K562 (cell line): ENCODE measurements at regions of chr4 and their contacts with region 1.

Region 1: DNA sequence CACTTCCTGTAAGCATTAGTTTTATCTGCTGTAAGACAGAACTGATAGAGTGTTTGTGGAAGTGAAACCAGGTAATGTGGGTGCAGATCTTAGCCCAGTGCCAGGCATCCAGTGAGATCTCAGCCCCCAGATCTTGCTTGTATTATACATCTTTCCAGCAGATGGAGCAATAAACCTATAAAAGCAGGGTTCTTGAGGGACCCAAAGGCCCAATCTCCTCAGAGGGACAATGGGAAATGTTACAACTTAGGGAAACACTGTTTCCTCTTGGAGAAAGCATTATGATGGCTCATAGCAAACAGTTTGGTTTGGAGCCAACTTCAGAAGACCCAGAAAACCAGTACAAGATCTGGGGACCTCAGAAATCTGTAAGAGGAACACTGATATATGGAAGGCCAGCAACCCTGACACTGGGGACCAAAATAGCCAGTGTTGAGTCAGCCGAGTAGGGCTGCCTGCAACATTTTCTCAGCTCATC is 206.3 kb downstream of the SLC7A11 start:
- DNase-seq: peak; percentile 22 to 62 (median 36)
- ATAC-seq: peak; percentile 97
- H3K4me3 ChIP-seq: no peak overlapping the region
- H3K27ac ChIP-seq: no peak overlapping the region
- H3K4me1 ChIP-seq: no peaks in the 10 kb centered on the region
- H3K27me3 ChIP-seq: no peaks in the 10 kb centered on the region
- CTCF ChIP-seq: peak; percentile 49 to 74 (median 60); a peak in 5 of 6 replicates
- EP300 ChIP-seq: no peak
- POLR2A ChIP-seq: no peak
- RAD21 ChIP-seq: peak; percentile 75 to 80

Region 2: GRCh38 chr4:137934911-137935310 is 100.9 kb before region 1 on chr4:
- CTCF ChIA-PET with region 1: no interaction called
- POLR2A ChIA-PET with region 1: no interaction called
- in situ Hi-C with region 1: no loop called
- intact Hi-C with region 1: no loop called
- DNase-seq: no peak
- ATAC-seq: no peak
- H3K4me3 ChIP-seq: no peak overlapping the region
- H3K27ac ChIP-seq: no peak overlapping the region
- H3K4me1 ChIP-seq: no peaks in the 10 kb centered on the region; a peak in 1 of 5 replicates
- H3K27me3 ChIP-seq: no peaks in the 10 kb centered on the region
- CTCF ChIP-seq: no peak
- EP300 ChIP-seq: no peak
- POLR2A ChIP-seq: no peak
- RAD21 ChIP-seq: no peak

Region 3: GRCh38 chr4:138090150-138090917 is 54.5 kb after region 1 on chr4:
- CTCF ChIA-PET with region 1: no interaction called
- POLR2A ChIA-PET with region 1: no interaction called
- in situ Hi-C with region 1: no loop called
- intact Hi-C with region 1: loop called (anchors 1 kb)
- DNase-seq: peak; percentile 60 to 72 (median 64)
- ATAC-seq: peak; percentile 91
- H3K4me3 ChIP-seq: no peak overlapping the region
- H3K27ac ChIP-seq: no peak overlapping the region
- H3K4me1 ChIP-seq: no peaks in the 10 kb centered on the region
- H3K27me3 ChIP-seq: no peaks in the 10 kb centered on the region; a peak in 1 of 5 replicates
- CTCF ChIP-seq: peak; percentile 60 to 79 (median 72)
- EP300 ChIP-seq: no peak
- POLR2A ChIP-seq: no peak
- RAD21 ChIP-seq: peak; percentile 48 to 76

Region 4: DNA sequence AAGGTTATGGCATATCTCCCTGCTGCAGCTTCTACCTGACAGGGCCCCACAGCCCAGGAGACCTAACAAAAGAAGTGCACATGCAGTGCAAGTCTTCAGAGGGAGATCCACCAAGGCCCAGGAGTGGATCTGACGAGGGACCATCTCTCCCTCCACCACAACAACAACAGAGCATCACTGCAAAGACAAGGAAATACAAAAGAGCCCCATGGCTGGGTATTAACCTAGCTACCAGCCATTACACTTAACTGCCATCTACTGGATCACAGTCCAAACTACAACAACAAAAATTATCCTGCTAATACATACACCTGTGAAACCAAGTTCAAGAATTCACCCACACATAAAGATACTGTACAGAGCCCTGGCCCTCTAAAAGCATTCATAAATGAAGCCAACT is 486.5 kb after region 1 on chr4:
- CTCF ChIA-PET with region 1: interaction called, 7 read pairs
- POLR2A ChIA-PET with region 1: no interaction called
- in situ Hi-C with region 1: no loop called
- intact Hi-C with region 1: loop called (anchors 1 kb)
- DNase-seq: peak in 2 of 4 experiments; percentile 24 to 29
- ATAC-seq: peak; percentile 90
- H3K4me3 ChIP-seq: no peak overlapping the region
- H3K27ac ChIP-seq: no peak overlapping the region
- H3K4me1 ChIP-seq: no peaks in the 10 kb centered on the region
- H3K27me3 ChIP-seq: no peaks in the 10 kb centered on the region
- CTCF ChIP-seq: peak; percentile 35 to 65 (median 59); a peak in 4 of 6 replicates
- EP300 ChIP-seq: no peak
- POLR2A ChIP-seq: no peak
- RAD21 ChIP-seq: peak; percentile 48 to 70

Region 5: DNA sequence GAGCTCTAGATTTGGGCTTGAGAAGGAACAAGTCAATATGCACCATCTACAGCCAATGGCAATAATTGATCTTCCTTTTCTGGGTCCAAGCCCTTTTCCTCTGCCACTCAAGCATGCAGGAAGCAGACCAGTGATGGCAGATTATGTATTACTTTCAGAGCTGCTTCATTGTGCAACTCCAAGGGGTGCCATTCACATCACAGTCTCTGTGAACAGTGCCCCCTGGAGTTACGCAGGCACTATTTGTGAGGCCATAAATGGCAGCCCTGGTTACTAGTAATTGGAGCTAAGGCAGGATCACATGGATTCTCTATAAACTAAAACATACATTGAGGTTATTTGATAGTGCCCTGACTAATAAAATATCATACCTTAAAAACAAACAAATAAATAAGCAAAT is 519.8 kb after region 1 on chr4:
- CTCF ChIA-PET with region 1: no interaction called
- POLR2A ChIA-PET with region 1: no interaction called
- in situ Hi-C with region 1: no loop called
- intact Hi-C with region 1: loop called (anchors 10 kb)
- DNase-seq: peak in 2 of 4 experiments; percentile 17 to 53
- ATAC-seq: peak; percentile 95
- H3K4me3 ChIP-seq: no peak overlapping the region
- H3K27ac ChIP-seq: no peak overlapping the region
- H3K4me1 ChIP-seq: peaks cover 0 to 2% of the 10 kb centered on the region in 2 experiments; a peak in 2 of 5 replicates
- H3K27me3 ChIP-seq: no peaks in the 10 kb centered on the region; a peak in 1 of 5 replicates
- CTCF ChIP-seq: peak; percentile 61 to 73 (median 65)
- EP300 ChIP-seq: no peak
- POLR2A ChIP-seq: no peak
- RAD21 ChIP-seq: peak; percentile 38 to 57

Region 6: DNA sequence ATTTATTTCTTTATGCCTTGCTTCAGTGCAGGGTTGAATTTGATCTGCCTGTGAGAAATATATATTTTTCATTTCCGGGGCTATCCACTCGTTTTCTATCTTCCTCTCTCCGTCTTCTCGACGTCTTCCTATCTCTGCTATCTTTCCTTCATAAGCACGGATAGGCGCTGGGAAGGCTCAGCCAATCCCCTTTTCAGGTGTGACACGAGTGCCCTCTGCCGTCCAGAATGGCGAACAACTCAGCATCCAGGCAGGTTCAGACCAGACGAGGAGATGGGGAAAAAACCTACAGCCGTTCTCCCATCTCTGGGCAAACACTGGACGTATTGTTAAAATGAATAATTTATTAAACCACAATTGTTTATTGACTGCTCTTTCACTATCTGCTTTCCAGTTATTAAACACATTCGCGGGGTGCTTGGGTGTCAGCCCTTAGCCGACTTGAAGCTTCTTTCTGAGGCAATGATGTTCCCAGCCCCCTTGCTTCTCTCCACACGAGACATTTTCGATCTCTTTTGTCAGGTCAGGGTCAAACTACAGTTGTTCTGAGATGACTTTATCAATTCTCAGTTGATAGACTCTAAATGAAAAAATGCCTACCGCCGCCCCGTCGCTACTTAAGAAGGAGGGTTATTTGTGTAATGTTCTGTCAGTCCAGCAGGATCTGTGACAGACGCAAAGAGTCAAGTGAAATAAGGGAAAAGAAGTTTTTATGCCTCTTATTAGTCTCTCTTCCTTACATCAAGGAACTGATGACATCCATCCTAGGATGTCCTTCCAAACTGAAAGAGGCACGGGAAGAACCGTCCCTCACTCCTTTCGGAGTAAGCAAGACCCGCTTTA is 883.5 kb after region 1 on chr4:
- CTCF ChIA-PET with region 1: interaction called, 7 read pairs
- POLR2A ChIA-PET with region 1: no interaction called
- in situ Hi-C with region 1: no loop called
- intact Hi-C with region 1: loop called (anchors 1 kb)
- DNase-seq: peak; percentile 71 to 85 (median 80)
- ATAC-seq: peak; percentile 96
- H3K4me3 ChIP-seq: no peak overlapping the region
- H3K27ac ChIP-seq: no peak overlapping the region
- H3K4me1 ChIP-seq: no peaks in the 10 kb centered on the region; a peak in 2 of 5 replicates
- H3K27me3 ChIP-seq: no peaks in the 10 kb centered on the region
- CTCF ChIP-seq: peak; percentile 83 to 93 (median 93)
- EP300 ChIP-seq: no peak
- POLR2A ChIP-seq: no peak
- RAD21 ChIP-seq: peak; percentile 82 to 85

Region 7: DNA sequence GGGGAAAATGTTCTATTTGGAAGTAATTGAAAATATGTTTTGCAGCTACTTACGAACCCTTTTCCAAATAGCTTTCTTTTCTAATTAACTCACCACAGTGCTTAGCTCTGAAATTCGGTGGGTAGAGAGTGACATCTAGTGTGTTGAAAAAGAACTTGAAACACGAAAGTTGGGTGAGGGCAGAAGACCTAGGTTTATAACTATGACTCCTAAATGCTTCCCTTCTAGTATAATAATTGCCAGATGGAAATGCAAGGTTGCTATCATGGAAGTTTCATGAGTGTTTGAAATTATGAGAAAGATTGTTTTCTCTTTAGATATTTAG is 902.5 kb after region 1 on chr4:
- CTCF ChIA-PET with region 1: no interaction called
- POLR2A ChIA-PET with region 1: no interaction called
- in situ Hi-C with region 1: no loop called
- intact Hi-C with region 1: loop called (anchors 5 kb)
- DNase-seq: peak in 2 of 4 experiments; percentile 31 to 61
- ATAC-seq: peak; percentile 96
- H3K4me3 ChIP-seq: no peak overlapping the region
- H3K27ac ChIP-seq: no peak overlapping the region
- H3K4me1 ChIP-seq: no peaks in the 10 kb centered on the region
- H3K27me3 ChIP-seq: no peaks in the 10 kb centered on the region
- CTCF ChIP-seq: peak; percentile 49 to 72 (median 55); a peak in 4 of 6 replicates
- EP300 ChIP-seq: no peak
- POLR2A ChIP-seq: no peak
- RAD21 ChIP-seq: peak; percentile 60 to 72